ENCODE measurements at regions of chr5 and their contacts with region 1.

Region 1: GRCh38 chr5:157858527-157859226 is at the start of gene CLINT1:
- DNase-seq: peak; percentile 78 to 86 (median 84)
- ATAC-seq: peak; percentile 96
- H3K4me3 ChIP-seq: peak within 1 kb of the TSS; percentile 96
- H3K4me3 Mint-ChIP-seq: peak within 1 kb of the TSS; percentile 88 to 99 (median 96)
- H3K27ac ChIP-seq: peak within 1 kb of the TSS; percentile 85
- H3K27ac Mint-ChIP-seq: peak within 1 kb of the TSS; percentile 94 to 99 (median 96)
- H3K4me1 ChIP-seq: peaks cover 7 to 13% of the 10 kb centered on the region in 2 donors
- H3K4me1 Mint-ChIP-seq: peaks cover 51 to 83% (median 78%) of the 10 kb centered on the region in 7 donors
- H3K27me3 ChIP-seq: no peaks in the 10 kb centered on the region
- H3K27me3 Mint-ChIP-seq: no peaks in the 10 kb centered on the region
- total RNA-seq, gene CLINT1: 58.8 to 94.2 (median 74.0) TPM

Region 2: DNA sequence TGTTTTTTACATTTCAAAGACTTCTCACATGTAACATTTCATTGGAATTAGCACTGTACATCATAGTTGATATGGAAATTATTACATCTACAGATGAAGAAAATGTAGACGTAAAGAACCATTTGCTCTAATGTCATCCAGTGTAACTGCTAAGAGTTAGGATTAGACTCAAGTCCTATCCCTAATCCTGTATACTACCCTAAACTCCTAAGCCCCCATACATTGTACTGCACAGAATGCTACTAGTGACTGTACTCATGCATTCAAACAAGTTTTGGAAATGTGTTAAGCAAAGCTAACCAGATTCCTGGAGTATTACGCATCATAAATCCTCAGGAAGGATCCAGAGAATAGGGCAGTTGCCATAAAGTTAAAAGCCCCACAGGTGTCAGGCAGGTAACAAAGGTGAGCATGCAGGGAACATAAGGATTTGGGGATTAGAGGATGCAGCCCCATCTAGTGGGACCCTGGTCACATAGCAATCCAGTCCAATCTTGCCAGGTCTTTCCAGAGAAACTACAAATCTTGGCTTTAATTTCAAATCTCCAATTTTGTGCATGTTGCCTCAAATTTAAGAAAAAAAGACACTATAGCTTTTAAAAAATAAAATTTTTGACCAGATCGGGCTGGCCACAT is 831.8 kb before region 1 on chr5:
- CTCF ChIA-PET with region 1: no interaction called
- POLR2A ChIA-PET with region 1: no interaction called
- intact Hi-C with region 1: no loop called
- DNase-seq: no peak
- ATAC-seq: no peak
- H3K4me3 ChIP-seq: no peak overlapping the region
- H3K4me3 Mint-ChIP-seq: peak overlapping the region in 1 of 10 donors; percentile 21
- H3K27ac ChIP-seq: no peak overlapping the region
- H3K27ac Mint-ChIP-seq: peak overlapping the region in 3 of 9 donors; percentile 41 to 89 (median 51)
- H3K4me1 ChIP-seq: peaks cover 16 to 23% of the 10 kb centered on the region in 2 donors
- H3K4me1 Mint-ChIP-seq: peaks cover 15 to 91% (median 30%) of the 10 kb centered on the region in 7 donors
- H3K27me3 ChIP-seq: no peaks in the 10 kb centered on the region
- H3K27me3 Mint-ChIP-seq: no peaks in the 10 kb centered on the region

Region 3: GRCh38 chr5:157603333-157604190 is 255.1 kb before region 1 on chr5:
- CTCF ChIA-PET with region 1: no interaction called
- POLR2A ChIA-PET with region 1: no interaction called
- intact Hi-C with region 1: loop called in 1 of 2 experiments (anchors 10 kb)
- DNase-seq: peak in 8 of 9 donors; percentile 16 to 65 (median 50)
- ATAC-seq: peak; percentile 90
- H3K4me3 ChIP-seq: peak overlapping the region; percentile 1
- H3K4me3 Mint-ChIP-seq: peak overlapping the region in 9 of 10 donors; percentile 0 to 74 (median 63)
- H3K27ac ChIP-seq: no peak overlapping the region
- H3K27ac Mint-ChIP-seq: peak overlapping the region in 7 of 9 donors; percentile 1 to 85 (median 49)
- H3K4me1 ChIP-seq: peaks cover 26 to 39% of the 10 kb centered on the region in 2 donors
- H3K4me1 Mint-ChIP-seq: peaks cover 30 to 81% (median 40%) of the 10 kb centered on the region in 7 donors
- H3K27me3 ChIP-seq: no peaks in the 10 kb centered on the region
- H3K27me3 Mint-ChIP-seq: no peaks in the 10 kb centered on the region

Region 4: DNA sequence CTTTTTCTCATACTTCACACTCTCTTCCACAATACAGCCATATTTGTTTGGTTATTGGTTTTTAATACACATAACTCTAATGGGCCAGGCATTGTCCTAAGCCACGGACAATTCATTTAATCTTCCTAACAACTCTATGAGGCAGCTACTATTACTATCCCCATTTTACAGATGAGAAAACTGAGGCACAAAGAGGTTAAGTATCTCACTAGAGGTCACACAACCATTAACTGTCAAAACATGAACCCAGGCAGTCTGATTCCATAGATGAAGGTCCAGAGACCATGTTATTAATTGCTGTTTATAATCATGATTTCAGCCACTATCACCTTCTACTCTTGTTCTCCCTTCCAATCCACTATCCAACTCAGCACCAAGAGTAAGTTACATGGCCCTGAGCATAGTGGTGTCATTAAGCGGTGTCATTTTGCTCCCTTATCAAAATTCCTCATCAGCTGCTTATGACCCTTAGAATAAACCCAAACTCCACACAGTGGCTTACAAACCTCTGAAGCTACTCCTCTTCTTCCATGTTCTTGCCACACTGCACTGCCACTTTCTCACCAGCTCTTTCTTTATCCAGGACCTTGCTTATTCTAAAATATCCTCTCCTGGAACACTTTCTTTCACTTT is 22.4 kb before region 1 on chr5:
- CTCF ChIA-PET with region 1: no interaction called
- POLR2A ChIA-PET with region 1: interaction called, 3 read pairs
- intact Hi-C with region 1: loop called in 1 of 2 experiments (anchors 2 kb)
- DNase-seq: no peak
- ATAC-seq: no peak
- H3K4me3 ChIP-seq: no peak overlapping the region
- H3K4me3 Mint-ChIP-seq: no peak overlapping the region
- H3K27ac ChIP-seq: no peak overlapping the region
- H3K27ac Mint-ChIP-seq: peak overlapping the region in 4 of 9 donors; percentile 17 to 72 (median 26)
- H3K4me1 ChIP-seq: no peaks in the 10 kb centered on the region
- H3K4me1 Mint-ChIP-seq: peaks cover 7 to 61% (median 53%) of the 10 kb centered on the region in 7 donors
- H3K27me3 ChIP-seq: no peaks in the 10 kb centered on the region
- H3K27me3 Mint-ChIP-seq: no peaks in the 10 kb centered on the region

Region 5: DNA sequence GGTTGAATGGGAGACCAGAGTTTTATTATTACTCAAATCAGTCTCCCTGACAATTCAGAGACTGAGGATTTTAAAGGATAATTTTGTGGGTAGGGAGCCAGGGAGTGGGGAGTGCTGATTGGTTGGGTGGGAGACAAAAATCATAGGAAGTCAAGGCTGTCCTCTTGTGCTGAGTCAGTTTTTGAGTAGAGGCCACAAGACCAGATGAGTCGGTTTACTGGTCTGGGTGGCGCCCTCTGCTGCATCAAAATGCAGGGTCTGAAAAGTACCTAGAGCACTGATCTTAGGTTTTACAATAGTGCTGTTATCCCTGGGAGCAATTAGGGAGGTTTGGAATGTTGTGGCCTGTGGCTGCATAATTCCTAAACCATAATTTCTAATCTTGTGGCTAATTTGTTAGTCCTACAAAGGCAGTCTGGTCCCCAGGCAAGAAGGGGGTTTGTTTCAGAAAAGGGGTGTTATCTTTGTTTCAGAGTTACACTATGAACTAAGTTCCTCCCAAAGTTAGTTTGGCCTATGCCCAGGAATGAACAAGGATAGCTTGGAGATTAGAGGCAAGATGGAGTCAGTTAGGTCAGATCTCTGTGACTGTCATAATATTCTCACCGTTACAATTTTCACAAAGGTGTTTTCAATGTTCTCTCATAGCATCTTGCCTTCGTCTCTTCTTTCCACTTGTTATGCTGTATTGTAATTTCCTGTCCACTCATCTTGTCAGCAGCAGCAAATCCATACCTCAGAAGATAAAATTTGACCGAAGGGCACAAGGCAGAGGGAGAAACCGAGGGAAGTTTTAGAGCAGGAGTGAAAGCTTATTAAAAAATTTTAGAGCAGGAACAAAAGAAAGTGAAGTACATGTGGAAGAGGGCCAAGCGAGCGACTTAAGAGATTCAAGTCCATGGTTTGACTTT is 59.5 kb after region 1 on chr5:
- CTCF ChIA-PET with region 1: interaction called, 5 read pairs
- POLR2A ChIA-PET with region 1: no interaction called
- intact Hi-C with region 1: loop called (anchors 1 kb)
- DNase-seq: peak; percentile 11 to 56 (median 22)
- ATAC-seq: peak; percentile 75
- H3K4me3 ChIP-seq: no peak overlapping the region
- H3K4me3 Mint-ChIP-seq: peak overlapping the region in 9 of 10 donors; percentile 7 to 87 (median 71)
- H3K27ac ChIP-seq: peak overlapping the region; percentile 31
- H3K27ac Mint-ChIP-seq: peak overlapping the region; percentile 40 to 90 (median 83)
- H3K4me1 ChIP-seq: peaks cover 5 to 11% of the 10 kb centered on the region in 2 donors
- H3K4me1 Mint-ChIP-seq: peaks cover 17 to 30% (median 28%) of the 10 kb centered on the region in 7 donors
- H3K27me3 ChIP-seq: no peaks in the 10 kb centered on the region
- H3K27me3 Mint-ChIP-seq: no peaks in the 10 kb centered on the region

Region 6: DNA sequence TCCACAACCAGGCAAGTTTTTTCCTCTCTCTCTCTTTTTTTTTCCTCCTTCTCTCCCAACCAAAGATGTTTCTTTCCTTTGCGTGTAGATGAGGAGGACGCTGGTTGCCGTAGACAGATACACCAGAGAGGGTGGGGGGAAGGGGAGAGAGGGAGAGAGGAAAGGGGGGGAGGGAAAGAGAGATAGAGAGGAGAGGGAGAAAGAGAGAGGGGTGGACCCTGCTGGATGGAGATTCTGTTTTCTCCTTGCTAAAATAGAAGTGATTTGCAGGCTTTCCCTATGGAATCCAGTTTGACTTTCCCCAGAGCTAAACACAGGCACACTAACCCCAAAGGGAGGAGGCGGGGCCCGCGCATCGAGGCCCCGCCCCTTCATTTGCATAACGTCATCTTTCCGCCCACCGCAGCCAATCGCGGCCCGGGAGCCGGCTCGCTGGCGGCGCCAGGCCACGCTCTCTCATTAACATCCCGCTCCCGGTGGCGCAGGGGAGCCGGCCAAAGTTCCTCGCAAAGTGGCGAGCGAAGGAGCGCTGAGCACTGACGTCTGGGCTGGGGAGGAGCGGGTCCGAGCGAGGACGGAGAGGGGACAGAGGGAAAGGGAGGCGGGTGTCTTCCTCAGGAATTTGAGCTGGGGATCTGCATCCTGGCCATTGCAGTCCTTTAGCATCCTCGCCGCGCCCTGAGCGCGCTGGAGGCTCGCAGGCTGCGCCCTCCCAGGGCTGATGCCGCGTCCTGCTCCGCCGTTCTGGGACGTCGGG is 1241.5 kb after region 1 on chr5:
- CTCF ChIA-PET with region 1: no interaction called
- POLR2A ChIA-PET with region 1: no interaction called
- intact Hi-C with region 1: loop called (anchors 5 to 10 kb)
- DNase-seq: peak; percentile 72 to 86 (median 84)
- ATAC-seq: peak; percentile 93
- H3K4me3 ChIP-seq: peak overlapping the region; percentile 59
- H3K4me3 Mint-ChIP-seq: peak overlapping the region; percentile 87 to 93 (median 92)
- H3K27ac ChIP-seq: no peak overlapping the region
- H3K27ac Mint-ChIP-seq: peak overlapping the region; percentile 29 to 89 (median 75)
- H3K4me1 ChIP-seq: peaks cover 13 to 19% of the 10 kb centered on the region in 2 donors
- H3K4me1 Mint-ChIP-seq: peaks cover 31 to 51% (median 35%) of the 10 kb centered on the region in 7 donors
- H3K27me3 ChIP-seq: peaks cover 18 to 22% of the 10 kb centered on the region in 2 donors
- H3K27me3 Mint-ChIP-seq: peaks cover 52 to 92% (median 60%) of the 10 kb centered on the region in 5 donors

Measured in naive thymus-derived CD4-positive, alpha-beta T cell (primary cell).